Activated CD4-positive, alpha-beta T cell treated with anti-CD3 and anti-CD28 coated beads for 36 hours (primary cell): ENCODE measurements at regions of chr6 and their contacts with region 1.

Region 1: DNA sequence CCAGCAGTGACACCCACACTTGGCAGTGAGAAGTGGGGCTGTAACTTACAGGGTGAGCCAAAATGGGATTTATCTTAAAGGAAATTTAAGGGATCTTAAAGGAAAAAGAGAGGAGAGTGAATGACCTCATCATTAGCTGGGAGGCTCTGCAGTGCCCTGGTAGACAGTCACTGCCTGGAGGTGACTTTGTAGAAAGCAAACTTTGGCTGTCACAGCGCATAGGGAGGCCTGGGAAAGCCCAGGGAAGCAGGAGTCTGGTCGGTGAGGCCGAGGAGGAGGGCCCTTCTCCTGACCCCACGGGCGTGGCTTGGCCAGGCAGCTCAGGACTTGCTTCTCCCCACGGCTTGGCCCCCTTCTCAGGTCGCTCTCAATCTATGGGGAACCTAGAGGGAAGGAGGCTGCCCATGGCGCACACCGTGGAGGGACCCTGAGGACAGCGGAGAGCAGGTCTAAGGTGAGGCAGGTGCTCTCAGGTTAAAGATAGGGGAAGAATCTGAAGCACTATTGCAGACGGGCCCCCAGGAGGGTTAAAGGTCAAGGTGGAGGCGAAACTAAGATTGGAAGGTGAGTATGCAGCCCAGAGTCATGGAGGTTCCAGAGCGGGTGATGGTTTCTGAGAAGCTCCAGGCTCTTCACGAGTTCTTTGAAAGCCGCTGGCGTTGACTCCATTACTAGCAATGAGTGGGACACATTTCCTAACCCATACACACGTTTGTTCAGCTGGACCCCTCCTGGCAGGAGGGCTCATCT is 15.6 kb upstream of the RIPK1 start:
- DNase-seq: no peak
- ATAC-seq: no peak
- H3K4me3 Mint-ChIP-seq: peak overlapping the region; percentile 69
- H3K27ac Mint-ChIP-seq: no peak overlapping the region
- H3K4me1 Mint-ChIP-seq: peaks cover 15% of the 10 kb centered on the region
- H3K27me3 Mint-ChIP-seq: no peaks in the 10 kb centered on the region

Region 2: GRCh38 chr6:2714111-2714895 is 338.4 kb before region 1 on chr6:
- CTCF ChIA-PET with region 1: no interaction called
- POLR2A ChIA-PET with region 1: no interaction called
- intact Hi-C with region 1: no loop called
- DNase-seq: no peak
- ATAC-seq: no peak
- H3K4me3 Mint-ChIP-seq: no peak overlapping the region
- H3K27ac Mint-ChIP-seq: no peak overlapping the region
- H3K4me1 Mint-ChIP-seq: peaks cover 5% of the 10 kb centered on the region
- H3K27me3 Mint-ChIP-seq: peaks cover 5% of the 10 kb centered on the region

Region 3: DNA sequence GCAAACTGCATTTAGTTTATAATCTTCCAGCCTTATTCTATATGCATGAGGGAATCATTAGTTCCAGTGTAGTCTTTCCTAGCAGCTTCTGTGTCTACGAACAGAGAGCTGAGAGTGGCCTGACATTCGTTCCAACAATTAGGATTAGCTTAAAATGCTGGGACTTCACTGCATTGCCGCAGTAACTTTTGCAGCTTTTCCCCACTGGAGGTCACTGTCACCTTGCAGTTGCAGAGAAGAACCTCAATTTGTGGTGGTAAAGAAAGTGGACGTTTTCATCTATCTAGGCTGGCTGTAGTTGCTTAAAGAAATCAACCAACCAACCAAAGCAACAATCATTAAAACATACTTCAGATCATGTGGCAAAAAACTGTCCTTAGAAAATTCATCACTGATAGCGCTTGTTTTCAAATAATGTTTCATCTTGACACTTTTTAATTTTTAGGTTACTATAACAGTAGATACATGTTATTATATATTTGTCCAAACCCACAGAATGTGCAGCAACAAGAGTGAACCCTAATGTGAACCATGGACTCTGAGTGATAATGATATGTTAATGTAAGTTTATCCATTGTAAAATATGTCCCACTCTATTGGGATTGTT is 314.2 kb before region 1 on chr6:
- CTCF ChIA-PET with region 1: no interaction called
- POLR2A ChIA-PET with region 1: no interaction called
- intact Hi-C with region 1: loop called in 1 of 2 experiments (anchors 1 kb)
- DNase-seq: peak; percentile 70
- ATAC-seq: peak; percentile 62
- H3K4me3 Mint-ChIP-seq: no peak overlapping the region
- H3K27ac Mint-ChIP-seq: no peak overlapping the region
- H3K4me1 Mint-ChIP-seq: peaks cover 5% of the 10 kb centered on the region
- H3K27me3 Mint-ChIP-seq: no peaks in the 10 kb centered on the region

Region 4: DNA sequence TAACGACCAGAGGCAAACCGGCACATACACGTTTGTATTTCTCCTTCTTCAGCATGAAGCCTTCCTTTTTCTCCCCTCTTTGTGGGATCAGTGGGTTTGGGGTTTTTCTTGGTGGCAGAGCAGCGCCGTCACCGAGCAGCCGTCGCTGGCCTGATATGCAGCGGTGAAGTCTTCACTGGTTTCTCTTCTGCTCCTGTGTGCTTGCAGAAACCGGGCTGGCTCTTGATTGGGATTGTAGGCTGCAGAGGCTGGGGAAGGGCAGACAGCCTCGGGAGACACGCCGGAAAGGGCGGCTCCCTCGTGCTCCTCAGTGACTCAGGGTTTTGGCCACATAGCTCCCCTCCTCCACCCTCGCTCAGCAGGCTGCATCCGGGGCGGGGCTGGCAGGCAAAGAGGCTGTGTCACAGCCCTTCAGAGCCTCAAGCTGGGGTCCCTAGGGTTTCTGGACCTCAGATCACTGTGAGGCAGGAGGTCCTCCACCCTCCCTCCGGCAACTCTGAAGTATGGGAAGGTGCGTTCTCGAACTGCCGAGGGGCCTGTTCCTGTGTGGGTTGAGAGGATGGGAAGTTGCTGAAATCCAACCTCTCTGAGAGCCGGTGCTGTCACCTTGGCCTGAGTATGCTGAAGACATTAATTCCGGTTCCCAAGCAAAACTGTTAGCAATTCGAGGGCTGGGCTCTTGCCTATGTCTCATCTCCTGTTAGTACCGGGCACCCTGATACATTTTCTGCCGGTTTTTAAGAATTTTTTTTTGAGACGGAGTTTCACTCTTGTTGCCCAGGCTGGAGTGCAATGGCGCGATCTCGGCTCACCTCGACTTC is 28.8 kb before region 1 on chr6:
- CTCF ChIA-PET with region 1: interaction called, 10 read pairs
- POLR2A ChIA-PET with region 1: interaction called, 4 read pairs
- intact Hi-C with region 1: loop called (anchors 1 kb)
- DNase-seq: peak; percentile 95
- ATAC-seq: peak; percentile 86
- H3K4me3 Mint-ChIP-seq: peak overlapping the region; percentile 78
- H3K27ac Mint-ChIP-seq: peak overlapping the region; percentile 95
- H3K4me1 Mint-ChIP-seq: peaks cover 62% of the 10 kb centered on the region
- H3K27me3 Mint-ChIP-seq: no peaks in the 10 kb centered on the region

Region 5: GRCh38 chr6:3039384-3039783 is 13.3 kb before region 1 on chr6:
- CTCF ChIA-PET with region 1: interaction called, 12 read pairs
- POLR2A ChIA-PET with region 1: no interaction called
- intact Hi-C with region 1: no loop called
- DNase-seq: no peak
- ATAC-seq: no peak
- H3K4me3 Mint-ChIP-seq: no peak overlapping the region
- H3K27ac Mint-ChIP-seq: no peak overlapping the region
- H3K4me1 Mint-ChIP-seq: no peaks in the 10 kb centered on the region
- H3K27me3 Mint-ChIP-seq: no peaks in the 10 kb centered on the region

Region 6: DNA sequence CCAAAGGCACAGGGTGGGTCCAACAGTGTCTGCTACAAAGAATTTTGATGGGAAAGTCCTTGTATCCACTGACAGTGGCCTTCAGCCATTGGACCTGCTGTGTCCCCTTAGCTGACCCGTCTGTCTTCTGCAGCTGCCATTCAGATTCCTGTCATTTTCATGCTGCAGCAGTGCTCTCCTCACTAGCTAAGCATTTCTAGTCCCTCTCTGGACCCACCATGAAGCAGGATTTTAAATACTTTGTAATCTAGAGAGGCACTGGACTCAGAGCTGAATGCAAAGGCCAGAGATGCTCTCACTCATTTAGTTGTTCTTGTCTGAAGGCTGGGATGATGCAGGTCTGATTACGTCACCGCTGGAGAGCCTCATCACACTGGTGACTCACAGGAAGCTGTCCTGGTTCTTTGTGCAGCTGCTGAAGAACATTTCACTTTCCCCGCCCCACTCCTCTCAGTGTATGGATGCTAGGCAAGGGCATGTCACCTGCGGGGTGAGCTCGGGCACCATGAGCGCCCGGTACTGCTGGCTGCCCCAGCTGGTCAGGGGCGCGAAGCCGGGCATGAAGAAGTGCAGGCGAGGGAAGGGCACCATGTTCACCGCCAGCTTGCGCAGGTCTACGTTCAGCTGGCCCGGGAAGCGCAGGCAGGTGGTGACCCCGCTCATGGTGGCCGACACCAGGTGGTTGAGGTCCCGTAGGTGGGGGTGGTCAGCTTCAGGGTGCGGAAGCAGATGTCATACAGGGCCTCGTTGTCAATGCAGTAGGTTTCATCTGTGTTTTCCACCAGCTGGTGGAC is 124.1 kb after region 1 on chr6:
- CTCF ChIA-PET with region 1: no interaction called
- POLR2A ChIA-PET with region 1: no interaction called
- intact Hi-C with region 1: no loop called
- DNase-seq: peak; percentile 76
- ATAC-seq: peak; percentile 96
- H3K4me3 Mint-ChIP-seq: no peak overlapping the region
- H3K27ac Mint-ChIP-seq: no peak overlapping the region
- H3K4me1 Mint-ChIP-seq: peaks cover 2% of the 10 kb centered on the region
- H3K27me3 Mint-ChIP-seq: peaks cover 5% of the 10 kb centered on the region